CD4-positive, alpha-beta memory T cell (primary cell): ENCODE measurements at regions of chr4 and their contacts with region 1.

Region 1: DNA sequence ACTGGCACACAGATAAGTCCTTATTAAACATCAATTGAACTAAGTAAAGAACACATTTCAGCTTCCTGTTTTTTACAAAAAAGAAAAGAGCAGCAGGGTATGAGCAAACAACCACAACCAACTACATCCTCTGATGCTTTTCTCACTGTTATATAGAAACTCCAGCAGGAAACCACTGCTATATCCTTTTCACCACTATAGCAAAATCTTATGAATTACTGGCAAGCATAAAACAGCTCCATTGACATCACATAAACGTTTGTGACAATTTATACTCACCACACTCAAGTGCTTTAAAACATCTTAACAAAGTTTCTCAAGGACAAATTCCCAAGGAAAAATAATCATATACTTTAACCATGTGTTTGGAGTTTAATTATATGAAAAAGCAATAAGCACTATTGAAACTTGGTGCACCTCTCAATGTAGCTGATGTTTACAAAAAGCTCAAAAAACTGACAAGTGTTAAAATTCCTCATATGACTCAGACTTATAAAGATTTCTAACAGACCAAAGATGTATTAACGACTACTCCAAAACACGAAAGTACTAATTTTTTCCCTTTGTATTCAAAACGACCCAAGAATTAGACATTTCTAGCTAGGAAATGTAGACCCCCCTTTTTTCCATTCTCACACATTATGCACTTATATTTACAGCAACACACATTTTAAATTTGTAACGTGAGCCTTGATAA is 12.9 kb downstream of the GPRIN3 start:
- DNase-seq: peak; percentile 62 to 87 (median 79)
- H3K4me3 ChIP-seq: peak overlapping the region in 1 of 2 donors; percentile 51
- H3K4me3 Mint-ChIP-seq: peak overlapping the region; percentile 70 to 91 (median 80)
- H3K27ac ChIP-seq: peak overlapping the region; percentile 70
- H3K27ac Mint-ChIP-seq: peak overlapping the region; percentile 94 to 98 (median 97)
- H3K4me1 ChIP-seq: peaks cover 92% of the 10 kb centered on the region
- H3K4me1 Mint-ChIP-seq: peaks cover 63 to 98% (median 78%) of the 10 kb centered on the region in 4 donors
- H3K27me3 ChIP-seq: no peaks in the 10 kb centered on the region
- H3K27me3 Mint-ChIP-seq: no peaks in the 10 kb centered on the region

Region 2: GRCh38 chr4:89226665-89227574 is 67.8 kb before region 1 on chr4:
- CTCF ChIA-PET with region 1: interaction called, 14 read pairs
- POLR2A ChIA-PET with region 1: interaction called, 3 read pairs
- intact Hi-C with region 1: no loop called
- DNase-seq: peak; percentile 71 to 76 (median 73)
- H3K4me3 ChIP-seq: no peak overlapping the region
- H3K4me3 Mint-ChIP-seq: peak overlapping the region; percentile 27 to 76 (median 57)
- H3K27ac ChIP-seq: no peak overlapping the region
- H3K27ac Mint-ChIP-seq: peak overlapping the region; percentile 4 to 83 (median 58)
- H3K4me1 ChIP-seq: peaks cover 4% of the 10 kb centered on the region
- H3K4me1 Mint-ChIP-seq: peaks cover 1 to 5% (median 3%) of the 10 kb centered on the region in 4 donors
- H3K27me3 ChIP-seq: no peaks in the 10 kb centered on the region
- H3K27me3 Mint-ChIP-seq: no peaks in the 10 kb centered on the region

Region 3: DNA sequence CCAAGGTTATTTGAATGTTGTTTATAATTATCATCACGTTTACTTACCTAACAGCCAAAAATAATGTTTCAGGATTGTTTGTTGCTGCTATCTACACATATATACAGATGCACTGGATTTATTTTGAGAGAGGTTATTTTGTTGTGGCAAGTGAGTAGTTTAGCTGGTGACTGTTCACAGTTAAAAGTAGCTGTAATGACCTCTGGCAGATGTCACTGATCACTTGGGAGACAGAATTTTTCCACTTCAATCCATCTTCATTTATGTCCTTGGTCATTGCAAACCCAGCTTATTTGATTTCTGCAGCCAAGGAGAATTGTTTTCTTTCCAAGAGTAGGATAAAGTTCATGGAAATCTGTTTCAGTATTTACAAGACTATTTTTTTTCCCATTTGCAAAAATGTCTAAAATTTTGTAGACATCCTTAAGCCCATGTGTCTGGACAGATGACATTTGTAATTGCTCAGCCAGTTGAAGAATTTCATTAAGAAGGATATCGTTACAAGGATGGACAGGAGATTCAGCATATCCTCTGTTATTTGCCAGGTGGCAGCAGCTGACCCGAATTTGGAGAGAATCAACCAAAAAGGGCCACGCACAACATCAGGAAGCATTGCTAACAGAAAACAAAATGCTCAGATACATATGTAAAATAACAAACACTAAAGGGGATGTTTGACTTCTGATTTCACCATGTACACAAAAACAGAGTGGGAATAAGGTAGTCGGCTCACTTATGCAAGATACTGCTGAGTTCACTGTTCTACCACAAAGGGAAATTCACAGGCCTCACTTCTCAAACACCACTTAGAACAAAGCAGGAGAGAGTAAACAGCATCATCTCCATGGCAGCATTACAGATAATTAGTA is 51.6 kb before region 1 on chr4:
- CTCF ChIA-PET with region 1: interaction called, 285 read pairs
- POLR2A ChIA-PET with region 1: interaction called, 21 read pairs
- intact Hi-C with region 1: no loop called
- DNase-seq: peak; percentile 55 to 81 (median 70)
- H3K4me3 ChIP-seq: no peak overlapping the region
- H3K4me3 Mint-ChIP-seq: peak overlapping the region in 6 of 8 donors; percentile 7 to 51 (median 18)
- H3K27ac ChIP-seq: peak overlapping the region; percentile 68
- H3K27ac Mint-ChIP-seq: peak overlapping the region; percentile 78 to 98 (median 93)
- H3K4me1 ChIP-seq: peaks cover 60% of the 10 kb centered on the region
- H3K4me1 Mint-ChIP-seq: peaks cover 46 to 74% (median 59%) of the 10 kb centered on the region in 4 donors
- H3K27me3 ChIP-seq: no peaks in the 10 kb centered on the region
- H3K27me3 Mint-ChIP-seq: no peaks in the 10 kb centered on the region

Region 4: GRCh38 chr4:89248879-89249281 is 45.8 kb before region 1 on chr4:
- CTCF ChIA-PET with region 1: interaction called, 285 read pairs
- POLR2A ChIA-PET with region 1: interaction called, 176 read pairs
- intact Hi-C with region 1: loop called (anchors 2 kb)
- DNase-seq: no peak
- H3K4me3 ChIP-seq: no peak overlapping the region
- H3K4me3 Mint-ChIP-seq: no peak overlapping the region
- H3K27ac ChIP-seq: no peak overlapping the region
- H3K27ac Mint-ChIP-seq: no peak overlapping the region
- H3K4me1 ChIP-seq: peaks cover 69% of the 10 kb centered on the region
- H3K4me1 Mint-ChIP-seq: peaks cover 56 to 92% (median 76%) of the 10 kb centered on the region in 4 donors
- H3K27me3 ChIP-seq: no peaks in the 10 kb centered on the region
- H3K27me3 Mint-ChIP-seq: no peaks in the 10 kb centered on the region

Region 5: DNA sequence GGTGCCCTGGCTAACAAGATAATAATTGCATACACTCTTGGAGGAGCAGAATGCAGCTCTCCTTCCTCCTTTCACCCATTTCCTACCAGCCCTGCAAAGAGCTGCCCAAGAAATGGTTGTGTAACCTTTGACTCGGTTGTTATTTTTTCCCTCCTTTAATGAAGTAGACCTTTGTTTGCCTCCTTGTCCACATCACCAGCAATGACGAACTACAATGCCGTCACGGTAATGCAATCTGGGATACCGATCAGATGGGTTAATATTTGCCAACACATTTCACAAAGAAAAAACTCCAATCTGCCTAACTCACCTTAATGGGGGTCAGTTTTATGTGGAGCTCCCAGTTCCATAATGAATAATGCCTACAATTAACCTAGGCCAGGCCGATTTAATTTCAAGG is 19.1 kb before region 1 on chr4:
- CTCF ChIA-PET with region 1: interaction called, 12 read pairs
- POLR2A ChIA-PET with region 1: interaction called, 19 read pairs
- intact Hi-C with region 1: no loop called
- DNase-seq: no peak
- H3K4me3 ChIP-seq: no peak overlapping the region
- H3K4me3 Mint-ChIP-seq: peak overlapping the region in 4 of 8 donors; percentile 3 to 18 (median 12)
- H3K27ac ChIP-seq: no peak overlapping the region
- H3K27ac Mint-ChIP-seq: peak overlapping the region in 6 of 7 donors; percentile 3 to 87 (median 52)
- H3K4me1 ChIP-seq: peaks cover 97% of the 10 kb centered on the region
- H3K4me1 Mint-ChIP-seq: peaks cover 56 to 77% (median 69%) of the 10 kb centered on the region in 4 donors
- H3K27me3 ChIP-seq: no peaks in the 10 kb centered on the region
- H3K27me3 Mint-ChIP-seq: no peaks in the 10 kb centered on the region

Region 6: DNA sequence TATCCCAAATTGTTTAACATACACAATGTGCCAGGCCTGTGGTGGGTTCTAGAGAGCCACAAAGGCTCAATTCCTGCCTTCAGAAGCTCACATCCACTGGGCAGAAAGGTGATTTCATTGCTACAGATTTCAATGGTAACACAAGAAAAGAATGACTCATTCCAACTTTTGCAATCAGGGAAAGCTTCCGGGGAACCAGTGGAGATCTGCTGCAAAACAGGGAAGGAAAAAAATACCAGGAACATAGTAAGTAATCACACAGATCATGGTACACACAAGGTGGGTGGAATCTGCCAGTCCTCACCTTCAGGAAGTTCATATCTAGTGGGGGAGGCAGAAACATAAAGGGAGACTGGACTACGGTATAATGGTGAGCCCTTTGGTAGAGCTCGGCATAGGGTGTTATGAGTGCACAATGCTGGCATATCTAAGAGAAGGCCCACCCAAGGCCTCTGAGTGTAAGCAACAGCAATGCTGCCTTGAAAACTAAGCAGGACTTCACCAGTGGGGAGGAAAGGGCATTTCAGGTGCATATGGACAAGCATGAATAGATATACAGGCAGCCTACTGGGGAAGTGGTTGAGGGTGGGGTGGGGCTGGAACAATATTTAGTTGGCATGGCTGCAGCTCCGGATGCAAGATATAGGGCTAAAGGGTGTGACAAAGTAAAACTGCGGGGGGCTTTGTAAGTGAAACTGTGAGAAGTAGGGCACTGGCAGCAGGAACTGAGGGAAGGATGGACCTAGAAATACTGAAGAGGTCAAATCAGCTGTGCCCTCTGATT is 11.3 kb before region 1 on chr4:
- CTCF ChIA-PET with region 1: interaction called, 64 read pairs
- POLR2A ChIA-PET with region 1: interaction called, 453 read pairs
- intact Hi-C with region 1: loop called (anchors 1 kb)
- DNase-seq: peak; percentile 83 to 89 (median 88)
- H3K4me3 ChIP-seq: peak overlapping the region; percentile 9 to 26
- H3K4me3 Mint-ChIP-seq: peak overlapping the region; percentile 83 to 91 (median 86)
- H3K27ac ChIP-seq: peak overlapping the region; percentile 86
- H3K27ac Mint-ChIP-seq: peak overlapping the region in 3 of 7 donors; percentile 99 to 100 (median 99)
- H3K4me1 ChIP-seq: peaks cover 97% of the 10 kb centered on the region
- H3K4me1 Mint-ChIP-seq: peaks cover 32 to 68% (median 47%) of the 10 kb centered on the region in 4 donors
- H3K27me3 ChIP-seq: no peaks in the 10 kb centered on the region
- H3K27me3 Mint-ChIP-seq: no peaks in the 10 kb centered on the region

Region 7: DNA sequence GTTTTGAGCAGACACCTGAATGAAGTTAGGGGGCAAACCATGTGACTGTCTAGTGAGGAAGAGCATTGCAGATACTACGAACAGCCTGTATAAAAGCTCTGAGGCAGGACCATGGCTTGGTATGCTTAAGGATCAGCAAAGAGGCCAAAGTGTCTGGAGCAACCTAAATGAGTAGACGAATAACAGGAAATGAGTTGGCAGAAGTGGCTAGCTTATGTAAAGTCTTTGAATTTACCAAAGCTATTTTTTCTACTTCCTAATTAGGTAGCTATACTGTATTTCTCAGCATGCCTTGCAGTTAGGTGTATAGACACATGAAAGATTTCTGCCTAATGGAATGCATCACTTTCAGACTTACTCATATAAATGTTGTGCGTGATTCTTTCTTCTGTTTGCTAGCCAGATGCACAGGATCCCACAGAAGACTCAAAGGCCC is 22.2 kb after region 1 on chr4:
- CTCF ChIA-PET with region 1: interaction called, 14 read pairs
- POLR2A ChIA-PET with region 1: interaction called, 43 read pairs
- intact Hi-C with region 1: no loop called
- DNase-seq: peak in 4 of 5 donors; percentile 39 to 74 (median 42)
- H3K4me3 ChIP-seq: peak overlapping the region; percentile 8 to 18
- H3K4me3 Mint-ChIP-seq: peak overlapping the region; percentile 43 to 80 (median 72)
- H3K27ac ChIP-seq: peak overlapping the region; percentile 55
- H3K27ac Mint-ChIP-seq: peak overlapping the region; percentile 87 to 95 (median 93)
- H3K4me1 ChIP-seq: peaks cover 34% of the 10 kb centered on the region
- H3K4me1 Mint-ChIP-seq: peaks cover 27 to 48% (median 35%) of the 10 kb centered on the region in 4 donors
- H3K27me3 ChIP-seq: no peaks in the 10 kb centered on the region
- H3K27me3 Mint-ChIP-seq: no peaks in the 10 kb centered on the region